Activated T-helper 1 cell treated with anti-CD3 and anti-CD28 coated beads, Interleukin-12 subunit alpha, Interleukin-12 subunit beta, Interleukin-2, Interleukin-4 antibody, amounts not matched to agents 30 ng/mL and 10 ng/mL and 1 ng/mL, durations not matched to agents 14 hours and 24 hours and 36 hours (primary cell): ENCODE measurements at regions of chr4 and their contacts with region 1.

Region 1: DNA sequence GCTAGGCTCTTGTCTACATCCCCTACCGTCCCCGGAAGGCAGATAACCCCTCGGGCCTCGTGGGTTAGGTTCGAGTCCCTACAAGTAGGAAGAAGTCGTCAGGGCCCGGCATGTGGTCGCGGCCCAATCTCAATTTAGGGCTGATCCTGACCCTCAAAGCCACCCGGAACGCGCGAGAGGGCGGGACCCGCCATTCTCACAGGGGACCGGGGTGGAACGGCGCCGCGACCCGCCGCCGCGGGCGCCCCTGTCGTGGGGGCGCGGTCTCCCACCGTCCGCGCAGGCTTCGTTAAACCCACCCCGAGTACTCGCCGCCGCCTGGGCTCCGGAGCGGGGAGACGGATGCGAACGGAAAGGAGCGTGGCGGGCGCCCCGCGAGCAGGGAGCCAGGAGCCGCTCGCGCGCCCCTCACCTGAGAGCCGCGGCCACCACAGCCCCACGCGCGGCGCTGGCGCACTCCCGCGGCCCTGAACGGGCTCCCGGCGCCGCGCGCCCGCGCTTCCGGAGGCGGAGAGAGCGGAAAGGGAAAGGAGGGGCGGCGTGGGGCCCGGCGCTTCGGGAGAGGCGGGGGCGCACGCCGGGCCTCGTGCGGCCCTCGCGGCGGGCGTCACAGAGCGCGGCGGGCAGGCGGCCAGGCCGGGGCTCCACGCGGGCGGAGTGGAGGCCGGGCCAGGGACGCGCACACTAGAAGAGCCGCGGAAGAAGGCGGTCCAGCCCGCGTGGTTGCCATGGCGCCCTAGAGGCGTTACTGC is at the start of gene CFAP97:
- DNase-seq: peak; percentile 75
- H3K4me3 Mint-ChIP-seq: peak within 1 kb of the TSS; percentile 99
- H3K27ac Mint-ChIP-seq: peak within 1 kb of the TSS; percentile 100
- H3K4me1 Mint-ChIP-seq: peaks cover 36% of the 10 kb centered on the region
- H3K27me3 Mint-ChIP-seq: peaks cover 1% of the 10 kb centered on the region
- total RNA-seq, gene CFAP97: 52.4 and 54.6 TPM in 2 replicates

Region 2: GRCh38 chr4:184417802-184418511 is 785.7 kb before region 1 on chr4:
- intact Hi-C with region 1: no loop called
- DNase-seq: peak; percentile 21
- H3K4me3 Mint-ChIP-seq: peak overlapping the region; percentile 78
- H3K27ac Mint-ChIP-seq: peak overlapping the region; percentile 95
- H3K4me1 Mint-ChIP-seq: peaks cover 90% of the 10 kb centered on the region
- H3K27me3 Mint-ChIP-seq: no peaks in the 10 kb centered on the region

Region 3: GRCh38 chr4:184961660-184962059 is 242.0 kb before region 1 on chr4:
- intact Hi-C with region 1: no loop called
- DNase-seq: no peak
- H3K4me3 Mint-ChIP-seq: no peak overlapping the region
- H3K27ac Mint-ChIP-seq: no peak overlapping the region
- H3K4me1 Mint-ChIP-seq: peaks cover 4% of the 10 kb centered on the region
- H3K27me3 Mint-ChIP-seq: peaks cover 15% of the 10 kb centered on the region

Region 4: DNA sequence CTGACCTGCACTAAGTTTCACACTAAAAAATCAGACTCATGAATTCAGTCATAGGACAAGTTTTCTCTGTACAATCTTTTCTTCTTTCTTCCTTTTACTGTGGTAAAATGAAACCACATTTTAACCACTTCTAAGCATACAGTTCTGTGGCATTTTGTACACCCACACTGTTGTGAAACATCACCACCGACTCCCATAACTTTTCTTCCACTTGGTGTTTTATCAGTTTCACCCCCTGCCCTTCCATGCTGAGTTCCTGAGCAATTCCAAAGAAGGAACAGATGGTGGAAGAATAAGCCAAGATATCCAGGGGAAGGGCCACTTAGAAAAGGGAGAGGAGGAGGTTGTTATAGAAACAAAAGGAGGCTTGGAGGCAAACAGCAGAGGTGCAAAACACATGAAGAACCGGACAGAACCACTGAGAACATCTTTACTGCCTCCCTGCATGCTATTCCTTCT is 38.0 kb before region 1 on chr4:
- intact Hi-C with region 1: loop called (anchors 1 kb)
- DNase-seq: no peak
- H3K4me3 Mint-ChIP-seq: no peak overlapping the region
- H3K27ac Mint-ChIP-seq: peak overlapping the region; percentile 80
- H3K4me1 Mint-ChIP-seq: peaks cover 20% of the 10 kb centered on the region
- H3K27me3 Mint-ChIP-seq: peaks cover 32% of the 10 kb centered on the region

Region 5: DNA sequence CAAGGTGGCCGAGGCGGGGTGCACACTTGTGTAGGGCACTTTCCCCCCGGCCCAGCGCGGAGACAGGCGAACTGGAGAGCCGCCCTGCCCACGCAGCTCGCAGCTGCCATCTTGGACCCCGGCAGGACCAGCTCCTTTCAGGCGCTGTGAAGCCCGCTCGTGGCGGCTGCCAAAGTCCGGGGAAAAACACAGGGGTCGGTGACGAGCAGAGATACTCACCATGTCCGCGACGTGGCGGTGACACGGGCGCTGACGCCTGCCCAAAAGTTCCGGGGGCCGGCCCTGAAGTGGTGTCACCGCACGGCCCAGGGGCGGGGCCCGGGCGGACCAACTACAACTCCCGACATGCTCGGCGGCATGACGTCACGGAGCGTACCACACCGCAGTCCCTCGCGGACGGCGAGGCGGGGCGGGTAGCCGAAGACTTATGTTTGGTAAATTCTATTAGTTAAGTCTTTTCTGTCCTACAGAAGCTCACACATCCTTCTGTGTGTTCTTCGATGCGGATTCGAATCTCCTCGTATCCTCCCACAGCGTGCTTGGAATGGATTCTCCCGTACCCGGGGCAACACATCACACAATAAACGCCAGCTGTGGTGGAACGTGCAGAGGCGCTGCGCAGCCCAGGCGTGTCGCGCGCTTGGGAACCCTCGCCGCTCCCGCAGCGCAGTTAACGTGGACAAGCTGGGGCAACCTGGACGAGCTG is 222.1 kb after region 1 on chr4 and contains the start of gene UFSP2:
- intact Hi-C with region 1: loop called (anchors 1 kb)
- DNase-seq: peak; percentile 86
- H3K4me3 Mint-ChIP-seq: peak within 1 kb of the TSS; percentile 88
- H3K27ac Mint-ChIP-seq: peak within 1 kb of the TSS; percentile 92
- H3K4me1 Mint-ChIP-seq: peaks cover 35% of the 10 kb centered on the region
- H3K27me3 Mint-ChIP-seq: peaks cover 7% of the 10 kb centered on the region
- total RNA-seq, gene UFSP2: 19.8 and 19.9 TPM in 2 replicates

Region 6: GRCh38 chr4:185597532-185598188 is 394.0 kb after region 1 on chr4:
- intact Hi-C with region 1: loop called (anchors 5 kb)
- DNase-seq: peak; percentile 32
- H3K4me3 Mint-ChIP-seq: no peak overlapping the region
- H3K27ac Mint-ChIP-seq: no peak overlapping the region
- H3K4me1 Mint-ChIP-seq: no peaks in the 10 kb centered on the region
- H3K27me3 Mint-ChIP-seq: peaks cover 13% of the 10 kb centered on the region